Right ventricle myocardium superior (tissue), 1 donor: ENCODE measurements at regions of chr17 and their contacts with region 1.

Region 1: DNA sequence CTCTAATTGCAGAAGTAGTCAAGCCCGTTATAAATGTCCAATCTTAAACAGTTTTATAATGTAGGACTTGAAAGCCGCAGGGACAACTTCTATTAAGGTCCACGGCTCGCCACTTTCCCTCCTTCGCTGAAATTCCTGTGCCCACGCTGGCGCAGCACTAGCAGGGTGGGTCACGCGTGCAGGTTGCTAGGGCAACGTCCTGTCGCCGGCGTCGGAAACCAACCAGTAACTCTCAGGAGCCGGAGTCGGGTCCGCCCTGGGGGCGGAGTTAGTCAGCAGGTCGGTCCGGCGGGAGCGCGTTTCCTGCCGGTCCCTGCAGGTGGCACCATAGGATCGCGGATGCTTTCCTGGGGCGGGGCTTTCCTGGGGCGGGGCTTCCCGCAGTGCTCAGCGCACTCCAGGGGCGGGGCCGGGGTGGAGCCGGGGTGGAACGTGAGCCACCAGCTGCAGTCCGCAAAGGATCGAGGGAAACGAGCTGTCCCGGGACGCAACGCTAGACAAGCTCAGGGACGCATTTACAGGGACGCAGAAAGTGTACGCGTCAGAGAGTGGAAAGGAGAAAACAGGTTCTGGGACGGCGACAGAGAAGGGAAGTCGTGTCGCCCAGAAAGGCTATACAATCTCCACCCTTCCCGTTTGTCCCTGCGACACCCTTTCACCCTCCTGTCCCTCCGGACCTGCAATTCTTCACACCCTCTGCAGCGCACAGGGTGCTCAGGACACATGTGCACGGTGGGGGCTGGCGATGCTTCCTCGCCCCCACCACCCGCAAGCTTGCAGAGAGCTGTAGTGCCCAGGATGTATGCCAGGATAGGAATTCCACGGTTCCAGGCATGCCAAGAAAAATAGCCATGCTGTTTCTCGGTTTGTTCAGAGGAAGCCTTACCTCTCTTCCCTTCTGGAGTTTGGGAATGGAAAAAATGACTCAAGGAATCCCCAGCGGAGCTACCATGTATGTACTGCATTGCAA is 12.4 kb downstream of the COPZ2 start:
- DNase-seq: peak; percentile 99
- ATAC-seq: peak; percentile 89

Region 2: DNA sequence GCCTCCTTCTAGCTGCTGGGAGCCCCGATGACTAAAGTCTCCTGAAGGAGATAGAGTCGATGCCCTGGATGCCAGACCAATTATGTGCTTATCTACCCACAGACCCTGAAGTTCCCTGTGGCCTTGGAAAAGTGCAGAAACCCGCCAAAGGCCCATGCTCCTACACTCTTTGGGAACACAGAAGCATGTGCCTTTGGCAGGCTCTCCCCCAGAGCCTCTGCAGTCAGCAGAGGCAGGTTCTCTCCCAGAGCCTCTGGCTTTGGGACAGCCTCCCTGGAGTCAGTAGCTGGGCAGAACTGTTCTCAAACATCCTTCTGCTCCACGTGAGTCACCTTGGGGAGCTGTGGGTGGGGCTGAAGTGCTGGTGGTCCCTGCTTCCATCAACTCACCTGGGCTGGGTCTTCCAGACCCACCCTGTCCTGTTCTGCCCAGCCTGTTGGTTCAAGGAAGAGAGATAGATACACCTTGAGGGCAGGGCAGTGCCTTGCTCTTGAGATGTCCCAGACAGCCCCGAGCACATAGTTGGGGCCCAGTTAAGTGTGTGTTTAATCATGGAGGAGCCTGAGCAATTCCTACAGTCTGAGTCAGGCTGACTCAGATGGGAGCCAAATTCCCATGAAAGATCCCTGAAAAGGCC is 57.5 kb before region 1 on chr17:
- intact Hi-C with region 1: no loop called
- DNase-seq: no peak
- ATAC-seq: no peak

Region 3: DNA sequence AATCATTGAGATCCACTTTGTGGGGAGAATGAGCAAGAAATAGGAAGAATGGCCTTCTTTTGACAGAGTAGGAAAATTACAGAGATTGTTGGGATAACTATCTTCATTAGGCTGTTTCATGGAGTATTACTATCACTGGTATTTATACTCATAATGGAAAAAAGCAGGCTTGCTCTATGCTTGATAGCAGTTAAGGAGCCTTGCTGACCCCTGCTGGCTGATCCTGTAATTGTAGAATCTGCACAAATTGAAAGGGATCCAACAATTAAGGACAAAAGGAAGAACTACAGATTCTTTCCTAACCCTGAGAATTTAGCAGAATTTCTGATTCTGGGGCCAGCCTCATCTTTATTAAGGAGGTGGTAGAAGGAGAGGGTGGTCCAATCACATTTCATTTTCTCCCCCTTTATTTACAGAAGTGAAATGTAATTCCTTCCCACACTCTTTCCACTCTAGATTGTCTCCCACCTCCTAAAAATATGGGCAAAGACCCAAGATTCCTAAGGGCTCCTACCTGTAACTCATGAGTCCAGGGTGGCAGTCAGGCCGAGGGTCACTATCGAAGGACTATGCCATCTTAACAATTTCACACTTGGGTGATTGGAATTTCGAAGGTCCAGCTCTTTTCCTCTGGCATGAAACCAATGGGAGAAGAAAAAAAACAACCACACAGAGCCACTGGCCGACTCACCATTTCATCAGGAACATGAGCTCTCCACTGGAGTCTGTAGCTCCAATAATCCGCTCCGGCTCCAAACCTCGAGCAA is 49.3 kb after region 1 on chr17:
- intact Hi-C with region 1: loop called (anchors 2 kb)
- DNase-seq: peak; percentile 76
- ATAC-seq: peak; percentile 86

Region 4: GRCh38 chr17:48131216-48131824 is 106.1 kb after region 1 on chr17:
- intact Hi-C with region 1: loop called (anchors 2 kb)
- DNase-seq: no peak
- ATAC-seq: peak; percentile 93